Dendritic cell treated with granulocyte-macrophage colony-stimulating factor and Interleukin-4, amounts not matched to agents 40 ng/mL and 50 ng/mL, for 4 days (primary cell): ENCODE measurements at regions of chr4 and their contacts with region 1.

Region 1: GRCh38 chr4:70892086-70892769 is 9.9 kb upstream of the MOB1B start:
- H3K4me3 Mint-ChIP-seq: no peak overlapping the region
- H3K27ac Mint-ChIP-seq: peak overlapping the region; percentile 81
- H3K4me1 Mint-ChIP-seq: peaks cover 17% of the 10 kb centered on the region
- H3K27me3 Mint-ChIP-seq: no peaks in the 10 kb centered on the region

Region 2: GRCh38 chr4:70849291-70849690 is 42.9 kb before region 1 on chr4:
- intact Hi-C with region 1: loop called (anchors 5 kb)
- H3K4me3 Mint-ChIP-seq: no peak overlapping the region
- H3K27ac Mint-ChIP-seq: peak overlapping the region; percentile 60
- H3K4me1 Mint-ChIP-seq: peaks cover 23% of the 10 kb centered on the region
- H3K27me3 Mint-ChIP-seq: no peaks in the 10 kb centered on the region